ENCODE measurements at regions of chr2 and their contacts with region 1.

Region 1: DNA sequence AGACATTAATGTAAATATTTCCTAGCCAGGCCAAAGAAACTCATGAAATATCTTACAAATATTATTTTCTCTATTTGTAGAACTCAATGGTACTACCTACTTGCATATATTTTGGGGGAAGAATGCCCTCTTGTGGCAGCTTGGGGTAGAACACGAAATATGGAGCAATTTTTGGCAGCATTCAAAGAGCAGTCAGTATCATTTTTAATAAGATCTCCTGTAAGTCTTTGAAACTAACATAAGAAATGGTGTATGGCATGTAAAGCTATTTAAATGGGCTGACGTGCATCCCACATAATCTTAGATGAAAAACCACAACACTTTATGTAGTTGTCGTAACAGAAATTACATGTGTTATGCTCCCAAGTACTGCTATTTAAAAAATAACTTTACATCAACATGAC is 62.3 kb upstream of the CCDC195 start:
- DNase-seq: peak in 5 of 10 donors; percentile 12 to 70 (median 32)
- H3K4me3 ChIP-seq: no peak overlapping the region
- H3K27ac ChIP-seq: peak overlapping the region in 1 of 59 donors; percentile 30
- H3K27me3 ChIP-seq: no peaks in the 10 kb centered on the region
- CTCF ChIP-seq: peak; percentile 62 to 88 (median 79)

Region 2: GRCh38 chr2:224982910-224983711 is 204.6 kb after region 1 on chr2:
- intact Hi-C with region 1: loop called in 1 of 2 experiments (anchors 10 kb)
- DNase-seq: peak in 1 of 10 donors; percentile 22
- H3K4me3 ChIP-seq: peak overlapping the region; percentile 8 to 71 (median 47)
- H3K27ac ChIP-seq: peak overlapping the region; percentile 33 to 93 (median 86)
- H3K27me3 ChIP-seq: peaks cover 0 to 5% (median 0%) of the 10 kb centered on the region in 45 donors
- CTCF ChIP-seq: peak in 1 of 56 donors; percentile 15